ENCODE measurements at regions of chr16 and their contacts with region 1.

Region 1: DNA sequence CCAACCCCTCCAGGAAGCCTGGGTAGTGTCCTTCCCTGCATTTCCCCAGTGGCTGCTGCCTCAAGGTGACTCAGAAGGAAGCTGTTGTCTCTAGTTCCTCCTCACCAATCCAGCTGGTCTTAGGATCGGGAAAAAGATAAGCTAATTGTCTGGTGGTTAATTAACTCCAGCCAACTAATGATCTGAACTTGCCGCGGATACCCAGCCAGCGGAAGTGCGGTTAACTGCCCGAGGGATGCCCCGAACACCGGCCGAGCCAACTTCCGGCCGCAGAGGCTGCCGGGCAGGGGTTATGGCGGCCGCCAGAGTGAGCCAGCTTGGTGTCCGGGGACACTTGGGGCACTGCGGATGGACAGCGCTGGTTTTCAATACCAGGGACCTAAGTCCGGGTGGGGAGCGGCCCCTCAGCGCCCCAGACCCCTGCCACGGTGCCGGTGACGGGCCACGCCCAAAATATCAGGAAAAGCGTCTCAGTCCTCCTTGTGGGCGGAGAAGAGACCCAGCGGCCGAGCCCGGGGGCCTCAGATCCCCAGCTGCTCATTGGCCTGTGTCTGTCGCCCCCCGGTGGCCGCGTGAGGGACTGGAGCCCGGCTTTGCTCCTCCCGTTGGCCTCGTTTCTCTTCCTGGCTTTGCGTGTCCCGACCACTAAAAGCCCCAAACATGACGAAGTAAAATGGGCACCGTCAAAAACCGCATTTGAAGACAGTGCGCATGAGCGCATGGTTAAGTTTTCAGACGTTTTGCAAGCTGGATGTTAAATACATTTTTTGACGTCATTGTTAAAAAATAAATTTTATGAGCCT is 10.2 kb upstream of the PRSS22 start:
- DNase-seq: peak; percentile 66
- ATAC-seq: peak; percentile 100
- H3K4me3 ChIP-seq: peak overlapping the region; percentile 60
- H3K27ac ChIP-seq: peak overlapping the region; percentile 71
- H3K4me1 ChIP-seq: peaks cover 4% of the 10 kb centered on the region
- H3K27me3 ChIP-seq: no peaks in the 10 kb centered on the region; a peak in 1 of 4 replicates
- CTCF ChIP-seq: peak; percentile 95 to 98 (median 98); a peak in 5 of 6 replicates
- EP300 ChIP-seq: peak in 1 of 2 experiments; percentile 28; a peak in 1 of 4 replicates
- POLR2A ChIP-seq: peak; percentile 87
- RAD21 ChIP-seq: peak; percentile 89

Region 2: DNA sequence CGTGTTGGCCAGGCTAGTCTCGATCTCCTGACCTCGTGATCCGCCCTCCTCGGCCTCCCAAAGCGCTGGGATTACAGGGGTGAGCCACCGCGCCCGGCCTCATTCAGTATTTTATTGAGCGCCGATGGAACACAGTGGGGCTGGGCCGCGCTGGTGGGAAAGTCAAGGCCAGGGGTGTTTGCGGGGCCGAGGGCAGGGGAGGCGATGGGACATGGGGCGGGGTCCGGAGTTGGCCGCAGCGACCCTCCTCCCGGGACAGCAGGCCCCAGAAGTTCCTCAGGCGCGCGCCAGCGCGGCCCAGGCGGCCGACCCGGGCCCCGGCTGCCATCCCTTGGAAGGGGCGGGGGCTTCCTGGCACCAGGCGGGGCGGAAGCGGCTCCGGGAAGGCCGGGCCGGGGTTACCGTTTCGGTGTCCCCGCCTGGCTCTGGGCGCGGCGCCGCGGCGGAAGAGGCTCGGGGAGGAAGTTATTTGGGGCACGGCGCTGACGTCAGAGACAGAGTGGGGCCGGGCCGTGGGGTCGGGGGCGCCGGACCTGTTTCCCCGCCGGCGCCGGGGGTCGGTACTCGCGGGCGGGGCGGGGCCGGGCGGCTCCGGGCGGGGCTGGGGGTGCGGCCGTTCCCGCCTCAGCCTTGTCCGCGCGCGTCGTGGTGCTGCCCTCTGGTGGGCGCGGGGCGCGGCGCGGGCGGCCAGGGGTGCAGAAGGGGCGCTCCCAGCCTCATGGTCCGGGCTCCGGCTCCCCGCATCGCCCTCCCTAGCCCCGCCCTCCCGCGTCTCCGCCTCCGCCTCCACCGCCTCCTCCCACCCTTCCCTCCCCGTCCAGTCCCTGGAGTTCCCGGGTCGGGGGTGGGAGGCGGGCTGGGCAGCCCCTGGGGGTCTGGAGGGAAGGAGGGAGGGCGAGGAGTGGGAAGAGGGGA is 147.2 kb before region 1 on chr16:
- CTCF ChIA-PET with region 1: no interaction called
- POLR2A ChIA-PET with region 1: no interaction called
- RAD21 ChIA-PET with region 1: no interaction called
- SMC1A ChIA-PET with region 1: no interaction called
- in situ Hi-C with region 1: no loop called
- intact Hi-C with region 1: loop called (anchors 10 kb)
- DNase-seq: peak; percentile 36
- ATAC-seq: peak; percentile 94
- H3K4me3 ChIP-seq: peak overlapping the region; percentile 84
- H3K27ac ChIP-seq: peak overlapping the region; percentile 39
- H3K4me1 ChIP-seq: 0 out of 2 replicates have a peak, but pooled peaks cover 6% of the 10 kb centered on the region
- H3K27me3 ChIP-seq: no peaks in the 10 kb centered on the region; a peak in 1 of 4 replicates
- CTCF ChIP-seq: peak; percentile 28 to 74 (median 58); a peak in 4 of 6 replicates
- EP300 ChIP-seq: no peak
- POLR2A ChIP-seq: peak; percentile 73
- RAD21 ChIP-seq: peak; percentile 56

Region 3: DNA sequence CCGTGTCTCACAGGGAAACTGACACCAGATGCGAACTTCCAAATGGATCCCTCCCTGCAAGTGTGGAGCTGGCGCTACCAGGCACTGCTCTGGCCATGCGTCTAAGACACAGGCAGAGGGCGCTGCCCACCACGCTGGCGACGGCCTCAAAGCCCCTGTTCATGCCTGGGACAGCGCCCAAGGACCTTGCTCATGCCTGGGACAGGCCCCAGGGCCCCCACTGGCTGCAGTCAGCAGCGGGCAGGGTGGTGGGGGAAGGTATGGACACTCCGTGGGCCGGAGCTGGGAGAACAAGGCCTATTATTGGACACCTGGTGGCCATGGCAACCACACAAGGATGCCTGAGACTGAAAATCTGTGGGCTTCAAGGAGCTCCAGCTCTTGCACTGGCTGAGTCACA is 29.3 kb before region 1 on chr16:
- CTCF ChIA-PET with region 1: interaction called, 22 read pairs
- POLR2A ChIA-PET with region 1: interaction called, 4 read pairs
- RAD21 ChIA-PET with region 1: interaction called, 26 read pairs
- SMC1A ChIA-PET with region 1: interaction called, 16 read pairs
- in situ Hi-C with region 1: no loop called
- intact Hi-C with region 1: loop called (anchors 2 kb)
- DNase-seq: no peak
- ATAC-seq: peak; percentile 97
- H3K4me3 ChIP-seq: no peak overlapping the region
- H3K27ac ChIP-seq: no peak overlapping the region
- H3K4me1 ChIP-seq: peaks cover 9% of the 10 kb centered on the region; the same call in 1 of the 2 replicates
- H3K27me3 ChIP-seq: no peaks in the 10 kb centered on the region
- CTCF ChIP-seq: peak; percentile 70 to 82 (median 80)
- EP300 ChIP-seq: no peak
- POLR2A ChIP-seq: no peak
- RAD21 ChIP-seq: peak; percentile 63

Region 4: GRCh38 chr16:2845116-2845515 is 23.1 kb before region 1 on chr16:
- CTCF ChIA-PET with region 1: interaction called, 22 read pairs
- POLR2A ChIA-PET with region 1: no interaction called
- RAD21 ChIA-PET with region 1: interaction called, 26 read pairs
- SMC1A ChIA-PET with region 1: interaction called, 7 read pairs
- in situ Hi-C with region 1: no loop called
- intact Hi-C with region 1: no loop called
- DNase-seq: no peak
- ATAC-seq: no peak
- H3K4me3 ChIP-seq: no peak overlapping the region
- H3K27ac ChIP-seq: no peak overlapping the region
- H3K4me1 ChIP-seq: peaks cover 9% of the 10 kb centered on the region; the same call in 1 of the 2 replicates
- H3K27me3 ChIP-seq: peaks cover 0 to 2% of the 10 kb centered on the region in 2 experiments; a peak in 1 of 4 replicates
- CTCF ChIP-seq: no peak
- EP300 ChIP-seq: no peak
- POLR2A ChIP-seq: no peak
- RAD21 ChIP-seq: no peak

Region 5: DNA sequence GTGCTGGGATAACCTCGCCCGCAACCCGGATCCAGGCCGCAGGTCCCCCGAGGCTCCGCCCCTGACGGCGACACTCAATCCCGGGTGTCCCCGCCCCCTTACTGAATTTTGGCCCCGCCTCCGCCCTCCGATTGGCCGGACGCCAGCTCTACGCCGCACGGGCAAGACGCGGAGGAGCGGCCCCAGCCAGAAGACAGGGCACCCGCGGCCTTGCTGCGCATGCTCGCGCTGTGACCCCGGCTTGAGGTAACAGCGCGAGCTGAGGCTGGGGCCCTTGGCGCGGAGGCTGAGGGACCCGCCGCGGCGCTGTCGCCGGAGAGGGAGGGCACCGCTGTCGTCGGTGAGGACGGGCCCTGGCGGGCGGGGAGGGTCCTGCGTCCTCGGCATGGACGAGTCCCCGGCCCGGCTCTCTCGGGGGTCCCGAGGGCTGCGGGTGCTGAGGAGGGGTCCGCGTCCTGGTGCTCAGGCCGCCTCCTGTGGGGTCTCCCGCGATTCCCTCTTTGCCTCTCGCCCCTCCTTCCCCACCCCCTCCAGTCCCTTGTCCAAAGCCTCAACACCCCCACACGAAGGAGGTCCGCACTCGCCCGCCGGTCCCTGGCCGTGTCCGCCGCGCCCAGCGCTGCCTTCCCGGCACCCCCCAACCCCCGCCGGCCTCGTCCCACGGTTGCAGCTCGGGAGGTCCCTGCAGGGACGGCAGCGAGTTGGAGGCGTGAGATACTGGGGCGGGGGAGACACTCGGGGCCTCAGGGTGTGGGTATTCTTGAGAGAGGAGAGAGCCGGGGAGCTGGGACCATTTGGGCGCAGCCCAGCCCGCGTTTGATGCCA is 15.1 kb after region 1 on chr16 and contains the start of gene FLYWCH2:
- CTCF ChIA-PET with region 1: interaction called, 12 read pairs
- POLR2A ChIA-PET with region 1: interaction called, 7 read pairs
- RAD21 ChIA-PET with region 1: interaction called, 8 read pairs
- SMC1A ChIA-PET with region 1: interaction called, 3 read pairs
- in situ Hi-C with region 1: no loop called
- intact Hi-C with region 1: no loop called
- DNase-seq: peak; percentile 90
- ATAC-seq: peak; percentile 89
- H3K4me3 ChIP-seq: peak within 1 kb of the TSS; percentile 90
- H3K27ac ChIP-seq: peak within 1 kb of the TSS; percentile 69
- H3K4me1 ChIP-seq: peaks cover 8% of the 10 kb centered on the region
- H3K27me3 ChIP-seq: no peaks in the 10 kb centered on the region
- CTCF ChIP-seq: peak in 1 of 3 experiments; percentile 8; a peak in 1 of 6 replicates
- EP300 ChIP-seq: no peak
- POLR2A ChIP-seq: peak; percentile 93
- RAD21 ChIP-seq: no peak
- polyA plus RNA-seq, gene FLYWCH2: 0.27 to 1.8 TPM

Region 6: GRCh38 chr16:2905431-2906387 is 37.5 kb after region 1 on chr16:
- CTCF ChIA-PET with region 1: interaction called, 30 read pairs
- POLR2A ChIA-PET with region 1: no interaction called
- RAD21 ChIA-PET with region 1: interaction called, 6 read pairs
- SMC1A ChIA-PET with region 1: interaction called, 8 read pairs
- in situ Hi-C with region 1: no loop called
- intact Hi-C with region 1: no loop called
- DNase-seq: peak; percentile 94
- ATAC-seq: peak; percentile 91
- H3K4me3 ChIP-seq: peak overlapping the region; percentile 75
- H3K27ac ChIP-seq: no peak overlapping the region
- H3K4me1 ChIP-seq: peaks cover 6% of the 10 kb centered on the region
- H3K27me3 ChIP-seq: no peaks in the 10 kb centered on the region
- CTCF ChIP-seq: no peak
- EP300 ChIP-seq: no peak
- POLR2A ChIP-seq: no peak
- RAD21 ChIP-seq: no peak

Region 7: GRCh38 chr16:2919511-2920255 is 51.5 kb after region 1 on chr16:
- CTCF ChIA-PET with region 1: interaction called, 80 read pairs
- POLR2A ChIA-PET with region 1: no interaction called
- RAD21 ChIA-PET with region 1: interaction called, 4 read pairs
- SMC1A ChIA-PET with region 1: interaction called, 8 read pairs
- in situ Hi-C with region 1: no loop called
- intact Hi-C with region 1: no loop called
- DNase-seq: no peak
- ATAC-seq: peak; percentile 70
- H3K4me3 ChIP-seq: no peak overlapping the region
- H3K27ac ChIP-seq: no peak overlapping the region
- H3K4me1 ChIP-seq: no peaks in the 10 kb centered on the region
- H3K27me3 ChIP-seq: no peaks in the 10 kb centered on the region
- CTCF ChIP-seq: peak; percentile 75 to 93 (median 91)
- EP300 ChIP-seq: no peak
- POLR2A ChIP-seq: no peak
- RAD21 ChIP-seq: peak; percentile 78